Heart right ventricle (tissue), 16 donors: ENCODE measurements at regions of chr18 and their contacts with region 1.

Region 1: DNA sequence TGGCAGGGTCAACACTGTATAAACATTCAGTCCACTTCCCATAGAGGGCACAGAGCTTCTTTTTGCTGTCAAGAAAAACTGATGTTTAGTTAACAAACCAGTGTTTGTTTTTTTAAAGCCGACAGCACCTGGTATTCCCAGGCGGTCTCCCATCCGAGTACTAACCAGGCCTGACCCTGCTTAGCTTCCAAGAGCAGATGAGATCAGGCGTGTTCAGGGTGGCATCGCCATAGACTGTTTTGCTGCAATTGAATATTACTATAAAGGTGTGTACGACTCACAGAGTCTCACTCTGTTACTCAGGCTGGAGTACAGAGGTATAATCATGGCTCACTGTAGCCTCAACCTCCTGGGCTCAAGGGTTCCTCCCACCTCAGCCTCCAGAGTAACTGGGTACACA is 31.5 kb downstream of the CABYR start:
- DNase-seq: no peak
- ATAC-seq: no peak
- H3K4me3 ChIP-seq: no peak overlapping the region
- H3K27ac ChIP-seq: no peak overlapping the region
- H3K4me1 ChIP-seq: no peaks in the 10 kb centered on the region
- H3K27me3 ChIP-seq: no peaks in the 10 kb centered on the region
- CTCF ChIP-seq: no peak

Region 2: GRCh38 chr18:24003903-24004640 is 166.3 kb before region 1 on chr18:
- intact Hi-C with region 1: loop called in 1 of 10 experiments (anchors 1 kb)
- DNase-seq: no peak
- ATAC-seq: no peak
- H3K4me3 ChIP-seq: no peak overlapping the region
- H3K27ac ChIP-seq: no peak overlapping the region
- H3K4me1 ChIP-seq: peaks cover 0 to 8% (median 0%) of the 10 kb centered on the region in 9 donors
- H3K27me3 ChIP-seq: peaks cover 0 to 13% (median 0%) of the 10 kb centered on the region in 7 donors
- CTCF ChIP-seq: no peak

Region 3: GRCh38 chr18:24112874-24113615 is 57.3 kb before region 1 on chr18:
- intact Hi-C with region 1: no loop called
- DNase-seq: no peak
- ATAC-seq: peak in 1 of 8 donors; percentile 11
- H3K4me3 ChIP-seq: no peak overlapping the region
- H3K27ac ChIP-seq: no peak overlapping the region
- H3K4me1 ChIP-seq: peaks cover 0 to 7% (median 0%) of the 10 kb centered on the region in 9 donors
- H3K27me3 ChIP-seq: no peaks in the 10 kb centered on the region
- CTCF ChIP-seq: no peak

Region 4: DNA sequence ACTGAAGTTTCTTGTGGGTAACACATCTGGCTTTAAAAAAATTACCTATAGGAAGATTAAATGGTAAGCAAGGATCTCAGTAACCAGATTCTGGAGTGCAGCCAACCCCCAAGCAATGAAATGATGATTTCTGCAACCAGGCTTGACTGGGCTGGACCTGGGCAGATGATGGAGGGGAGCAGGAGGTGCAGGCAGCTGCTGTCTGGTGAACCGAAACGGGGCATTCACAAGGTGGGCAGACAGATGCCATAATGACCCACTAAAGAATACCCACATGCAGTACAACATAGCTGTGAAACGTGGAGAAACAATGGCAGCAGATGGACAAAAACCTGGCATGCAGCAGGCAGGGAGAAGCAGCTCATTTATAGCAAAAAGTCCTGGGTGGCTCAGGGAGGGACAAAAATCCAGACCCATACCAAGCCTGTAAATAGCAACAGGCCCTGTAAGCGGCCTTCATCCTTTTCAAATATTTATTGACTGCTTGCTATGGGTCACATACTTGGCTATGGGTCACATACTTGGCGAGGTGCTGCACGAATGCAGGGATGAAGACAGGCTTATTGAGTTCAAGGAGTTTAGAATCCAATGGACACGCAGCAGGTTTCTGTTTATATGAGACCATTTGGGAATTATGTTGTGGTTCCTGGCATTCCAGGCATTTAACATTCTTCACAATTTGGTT is 534.7 kb after region 1 on chr18:
- intact Hi-C with region 1: no loop called
- DNase-seq: no peak
- ATAC-seq: no peak
- H3K4me3 ChIP-seq: no peak overlapping the region
- H3K27ac ChIP-seq: no peak overlapping the region
- H3K4me1 ChIP-seq: no peaks in the 10 kb centered on the region
- H3K27me3 ChIP-seq: peaks cover 0 to 7% (median 0%) of the 10 kb centered on the region in 7 donors
- CTCF ChIP-seq: no peak